ENCODE measurements at regions of chr6 and their contacts with region 1.

Region 1: GRCh38 chr6:139028658-139029469 is at the start of gene ABRACL:
- DNase-seq: peak; percentile 73
- H3K4me3 Mint-ChIP-seq: peak within 1 kb of the TSS; percentile 93
- H3K27ac Mint-ChIP-seq: peak within 1 kb of the TSS; percentile 82
- H3K4me1 Mint-ChIP-seq: peaks cover 29% of the 10 kb centered on the region
- H3K27me3 Mint-ChIP-seq: no peaks in the 10 kb centered on the region
- total RNA-seq, gene ABRACL: 129 and 135 TPM in 2 replicates

Region 2: GRCh38 chr6:138692058-138692977 is 336.5 kb before region 1 on chr6:
- intact Hi-C with region 1: loop called (anchors 5 kb)
- DNase-seq: peak; percentile 44
- H3K4me3 Mint-ChIP-seq: peak overlapping the region; percentile 75
- H3K27ac Mint-ChIP-seq: peak overlapping the region; percentile 11
- H3K4me1 Mint-ChIP-seq: peaks cover 11% of the 10 kb centered on the region
- H3K27me3 Mint-ChIP-seq: peaks cover 50% of the 10 kb centered on the region

Region 3: DNA sequence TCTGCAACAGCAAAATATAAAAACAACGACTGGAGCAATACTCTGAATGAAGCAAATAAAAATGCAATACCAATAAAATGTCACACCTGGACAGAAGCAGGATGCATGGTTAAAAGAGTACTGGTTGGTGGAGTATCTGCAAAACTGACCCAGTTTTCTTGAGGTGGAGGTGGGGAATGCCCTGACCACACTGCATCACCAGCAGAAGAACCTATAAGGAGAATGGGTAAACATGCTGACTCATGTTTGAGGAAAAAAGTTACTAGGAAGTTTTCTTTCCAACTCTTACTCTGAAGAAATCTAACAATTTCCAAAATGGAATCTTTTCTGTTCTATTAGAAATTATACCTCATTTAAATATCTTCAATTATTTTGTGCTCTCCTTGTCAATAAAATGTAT is 84.5 kb before region 1 on chr6:
- intact Hi-C with region 1: loop called (anchors 2 kb)
- DNase-seq: peak; percentile 21
- H3K4me3 Mint-ChIP-seq: peak overlapping the region; percentile 17
- H3K27ac Mint-ChIP-seq: peak overlapping the region; percentile 53
- H3K4me1 Mint-ChIP-seq: peaks cover 63% of the 10 kb centered on the region
- H3K27me3 Mint-ChIP-seq: no peaks in the 10 kb centered on the region

Region 4: DNA sequence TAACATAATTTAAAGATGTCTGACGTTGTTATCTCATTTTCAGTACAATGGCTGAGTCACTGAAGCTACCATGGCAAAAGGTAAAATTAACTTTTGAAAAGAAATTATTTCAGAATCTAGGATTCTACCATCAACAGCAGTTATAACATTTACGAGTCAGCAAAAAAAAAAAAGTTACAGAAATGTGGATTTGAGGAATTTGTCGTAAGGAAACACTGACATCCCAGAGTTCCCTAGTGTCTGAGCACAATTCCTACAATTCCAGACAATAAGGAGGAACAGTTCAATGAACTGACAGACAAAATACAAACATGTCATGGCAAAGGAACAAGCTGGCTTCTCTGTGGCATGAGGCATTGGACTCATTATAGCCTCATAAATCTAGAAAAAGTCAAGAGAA is 18.8 kb after region 1 on chr6:
- intact Hi-C with region 1: no loop called
- DNase-seq: no peak
- H3K4me3 Mint-ChIP-seq: no peak overlapping the region
- H3K27ac Mint-ChIP-seq: no peak overlapping the region
- H3K4me1 Mint-ChIP-seq: no peaks in the 10 kb centered on the region
- H3K27me3 Mint-ChIP-seq: peaks cover 1% of the 10 kb centered on the region

Region 5: GRCh38 chr6:139099984-139100383 is 71.1 kb after region 1 on chr6:
- intact Hi-C with region 1: loop called (anchors 1 kb)
- DNase-seq: no peak
- H3K4me3 Mint-ChIP-seq: no peak overlapping the region
- H3K27ac Mint-ChIP-seq: peak overlapping the region; percentile 65
- H3K4me1 Mint-ChIP-seq: peaks cover 20% of the 10 kb centered on the region
- H3K27me3 Mint-ChIP-seq: no peaks in the 10 kb centered on the region

Region 6: GRCh38 chr6:139124887-139125672 is 96.2 kb after region 1 on chr6:
- intact Hi-C with region 1: loop called (anchors 5 kb)
- DNase-seq: peak; percentile 77
- H3K4me3 Mint-ChIP-seq: peak overlapping the region; percentile 47
- H3K27ac Mint-ChIP-seq: peak overlapping the region; percentile 92
- H3K4me1 Mint-ChIP-seq: peaks cover 33% of the 10 kb centered on the region
- H3K27me3 Mint-ChIP-seq: no peaks in the 10 kb centered on the region

Region 7: GRCh38 chr6:139240161-139241010 is 211.5 kb after region 1 on chr6:
- intact Hi-C with region 1: no loop called
- DNase-seq: no peak
- H3K4me3 Mint-ChIP-seq: no peak overlapping the region
- H3K27ac Mint-ChIP-seq: no peak overlapping the region
- H3K4me1 Mint-ChIP-seq: peaks cover 11% of the 10 kb centered on the region
- H3K27me3 Mint-ChIP-seq: peaks cover 2% of the 10 kb centered on the region

Region 8: DNA sequence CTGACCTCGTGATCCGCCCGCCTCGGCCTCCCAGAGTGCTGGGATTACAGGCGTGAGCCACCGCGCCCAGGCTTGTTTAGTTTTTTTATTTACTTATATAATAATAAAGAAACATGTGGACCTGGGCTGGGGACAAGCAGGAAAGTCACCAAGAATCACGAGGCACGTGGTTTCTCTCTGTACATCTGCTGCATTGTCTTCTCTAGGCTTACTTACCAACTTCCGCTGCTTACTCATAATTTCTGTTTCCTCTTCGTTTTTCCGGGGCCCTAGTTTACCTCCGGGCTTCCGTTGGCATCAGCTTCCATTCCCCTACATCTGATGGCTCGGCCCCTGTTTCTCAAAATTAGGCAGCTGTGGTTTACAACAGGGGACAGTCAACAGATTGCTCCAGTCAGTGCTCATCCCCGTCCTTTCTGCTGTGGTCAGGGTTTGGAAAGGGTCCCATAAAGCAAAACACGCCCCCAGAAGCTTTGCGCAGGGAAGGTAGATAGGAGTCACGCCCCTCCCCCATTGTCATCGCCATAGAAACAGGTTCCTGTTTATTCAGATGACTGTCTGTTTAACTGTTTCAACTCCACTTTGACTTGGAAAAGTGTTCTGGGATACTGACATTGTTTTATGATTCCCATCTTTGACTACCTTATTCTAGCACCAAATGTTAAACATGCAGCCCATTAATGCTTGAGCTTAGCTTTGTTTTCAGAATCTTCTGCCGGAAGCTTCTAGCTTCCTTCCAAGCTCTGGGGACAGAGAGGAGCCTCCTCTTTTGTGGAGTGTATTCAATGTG is 294.8 kb after region 1 on chr6:
- intact Hi-C with region 1: loop called (anchors 1 kb)
- DNase-seq: peak; percentile 70
- H3K4me3 Mint-ChIP-seq: peak overlapping the region; percentile 63
- H3K27ac Mint-ChIP-seq: peak overlapping the region; percentile 90
- H3K4me1 Mint-ChIP-seq: peaks cover 43% of the 10 kb centered on the region
- H3K27me3 Mint-ChIP-seq: no peaks in the 10 kb centered on the region